ENCODE measurements at regions of chr11 and their contacts with region 1.

Region 1: DNA sequence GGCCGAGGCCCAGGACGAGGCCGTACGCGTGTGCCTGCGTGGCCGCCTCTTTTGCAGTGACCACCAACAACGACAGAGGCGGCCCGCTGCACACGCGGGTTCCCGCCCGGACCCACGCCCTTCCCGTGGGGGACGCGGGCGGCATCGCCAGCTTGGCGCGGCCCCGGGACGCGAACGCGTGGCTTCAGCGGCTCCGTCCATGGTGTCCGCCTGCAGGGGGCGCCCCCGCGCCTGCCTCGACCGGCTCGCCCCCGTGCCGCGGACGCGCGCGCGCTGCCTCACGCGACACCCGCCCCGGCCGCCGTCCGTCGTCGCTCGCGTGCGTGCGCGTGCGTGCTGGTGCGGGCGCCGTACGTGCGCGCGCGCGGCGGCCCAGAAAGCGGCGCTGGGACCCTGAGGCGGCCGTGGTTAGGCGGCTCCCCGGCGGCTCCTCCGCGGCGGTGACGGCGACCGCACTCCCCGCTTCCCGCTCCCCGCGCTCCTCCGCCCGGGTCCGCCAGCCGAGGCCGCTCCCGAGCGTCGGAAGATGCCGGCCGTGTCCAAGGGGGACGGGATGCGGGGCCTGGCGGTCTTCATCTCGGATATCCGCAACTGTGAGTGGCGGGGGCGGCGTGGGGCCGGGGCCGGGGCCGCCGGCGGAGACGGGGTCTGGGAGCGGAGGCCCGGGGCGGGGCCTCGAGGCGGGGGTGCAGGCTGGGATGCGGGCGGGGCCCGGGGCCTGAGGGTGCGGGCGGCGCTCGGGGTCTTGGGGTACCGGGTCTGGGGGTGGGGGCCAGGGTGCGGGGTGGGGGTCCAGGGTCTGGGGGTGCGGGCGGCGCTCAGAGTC is at the start of gene AP2A2:
- DNase-seq: peak; percentile 94
- total RNA-seq, gene AP2A2: 40.3 TPM

Region 2: GRCh38 chr11:842370-843002 is 83.2 kb before region 1 on chr11 and contains the starts of genes POLR2L and TSPAN4:
- intact Hi-C with region 1: loop called (anchors 2 kb)
- DNase-seq: peak; percentile 95
- total RNA-seq, gene POLR2L: 202 TPM
- total RNA-seq, gene TSPAN4: 27.9 TPM

Region 3: DNA sequence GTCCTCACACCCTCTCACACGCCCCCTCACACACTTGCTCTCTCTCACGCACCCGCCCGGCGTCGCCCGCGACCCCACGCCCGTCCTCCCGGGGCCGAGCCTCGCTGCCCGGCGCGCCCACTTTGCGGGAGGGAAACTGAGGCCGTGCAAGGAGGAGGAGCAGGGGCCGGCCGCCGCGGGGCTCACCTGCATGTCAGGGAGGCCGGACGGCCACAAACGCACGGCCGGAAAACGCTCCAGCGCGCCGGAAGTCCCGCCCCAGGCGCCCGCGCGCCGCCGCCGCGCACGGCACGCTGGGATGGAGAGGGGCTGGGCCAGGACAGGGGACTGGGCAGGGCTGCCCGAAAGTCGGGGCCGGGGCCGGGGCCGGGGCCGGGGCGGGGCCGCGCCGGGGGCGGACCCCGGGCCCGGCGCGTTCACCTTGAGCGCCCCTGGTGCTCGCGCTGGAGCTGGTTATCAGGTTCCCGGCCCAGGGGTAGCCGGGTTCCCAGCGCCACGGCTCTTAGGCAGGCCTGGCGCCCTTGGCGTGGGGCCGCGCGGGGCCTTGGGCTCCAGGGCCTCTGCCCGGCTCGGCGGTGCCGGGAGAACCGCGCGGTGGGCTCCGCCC is 15.0 kb before region 1 on chr11 and contains the start of gene CHID1:
- intact Hi-C with region 1: loop called (anchors 1 kb)
- DNase-seq: peak; percentile 96
- total RNA-seq, gene CHID1: 63.7 TPM

Region 4: DNA sequence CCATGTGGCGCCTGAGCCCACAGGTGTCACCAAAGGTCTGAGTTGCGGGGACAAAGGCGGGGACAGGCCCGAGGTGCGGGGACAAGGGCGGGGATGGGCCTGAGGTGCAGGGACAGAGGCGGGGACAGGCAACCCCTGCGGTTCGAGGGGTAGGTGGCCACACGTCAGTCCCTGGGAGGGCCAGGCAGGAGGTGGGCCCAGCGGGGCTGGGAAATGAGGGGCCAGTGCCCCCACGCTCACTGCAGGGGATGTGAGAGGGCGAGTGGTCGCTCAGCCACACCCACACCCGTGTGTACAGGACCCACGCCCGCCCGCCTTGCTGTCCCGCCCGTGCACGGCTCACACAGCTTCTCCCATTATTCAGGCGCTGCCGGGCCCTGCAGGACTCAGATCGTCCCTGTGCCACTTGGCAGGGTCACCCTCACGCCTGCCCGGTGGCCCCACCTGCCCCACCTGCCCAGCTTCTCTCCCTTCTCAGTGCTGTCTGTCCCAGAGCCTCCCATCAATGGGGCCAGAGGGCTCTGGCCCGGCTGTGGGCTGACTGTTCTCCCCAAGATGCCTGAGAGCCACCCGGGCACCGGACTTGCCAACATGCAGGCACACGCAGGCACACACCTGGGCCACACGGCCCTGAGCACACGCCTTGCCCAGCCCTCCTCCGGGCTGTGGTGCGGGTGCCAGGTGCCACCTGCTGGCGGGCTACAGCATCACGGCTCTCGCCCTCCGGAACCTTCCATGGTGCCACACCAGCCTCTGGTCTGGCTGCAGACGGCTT is 125.1 kb after region 1 on chr11:
- intact Hi-C with region 1: loop called (anchors 5 kb)
- DNase-seq: peak; percentile 77

Measured in cardiac septum (tissue), 1 donor.